Activated naive CD4-positive, alpha-beta T cell treated with anti-CD3 and anti-CD28 coated beads for 36 hours (primary cell): ENCODE measurements at regions of chr5 and their contacts with region 1.

Region 1: DNA sequence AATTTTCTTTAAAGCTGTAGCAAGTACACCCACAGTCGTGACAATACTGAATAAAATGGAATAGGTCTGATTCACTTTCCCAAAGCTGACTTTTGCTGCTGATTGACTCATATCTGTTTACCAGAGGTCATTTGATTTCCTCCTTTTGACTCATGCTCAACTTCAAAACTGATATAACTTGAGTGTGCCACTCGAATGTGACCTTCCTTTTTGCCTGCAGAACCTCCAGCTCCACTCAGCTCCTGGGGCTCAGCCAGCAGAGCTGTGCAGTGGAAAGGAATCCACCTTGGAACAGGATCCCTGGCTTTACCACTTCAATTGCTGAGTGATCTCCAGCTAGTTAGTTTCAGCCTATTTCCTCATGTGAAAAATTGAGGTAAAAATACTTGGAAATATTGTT is 84.1 kb downstream of the FEM1C start:
- DNase-seq: peak; percentile 29
- H3K4me3 Mint-ChIP-seq: no peak overlapping the region
- H3K27ac Mint-ChIP-seq: no peak overlapping the region
- H3K4me1 Mint-ChIP-seq: peaks cover 3% of the 10 kb centered on the region
- H3K27me3 Mint-ChIP-seq: peaks cover 30% of the 10 kb centered on the region

Region 2: GRCh38 chr5:115377468-115378217 is 82.8 kb before region 1 on chr5:
- CTCF ChIA-PET with region 1: no interaction called
- intact Hi-C with region 1: loop called (anchors 1 kb)
- DNase-seq: no peak
- H3K4me3 Mint-ChIP-seq: no peak overlapping the region
- H3K27ac Mint-ChIP-seq: no peak overlapping the region
- H3K4me1 Mint-ChIP-seq: peaks cover 6% of the 10 kb centered on the region
- H3K27me3 Mint-ChIP-seq: no peaks in the 10 kb centered on the region

Region 3: GRCh38 chr5:115487756-115488155 is 27.3 kb after region 1 on chr5:
- CTCF ChIA-PET with region 1: no interaction called
- intact Hi-C with region 1: loop called (anchors 1 kb)
- DNase-seq: peak; percentile 53
- H3K4me3 Mint-ChIP-seq: no peak overlapping the region
- H3K27ac Mint-ChIP-seq: peak overlapping the region; percentile 64
- H3K4me1 Mint-ChIP-seq: peaks cover 44% of the 10 kb centered on the region
- H3K27me3 Mint-ChIP-seq: peaks cover 8% of the 10 kb centered on the region

Region 4: DNA sequence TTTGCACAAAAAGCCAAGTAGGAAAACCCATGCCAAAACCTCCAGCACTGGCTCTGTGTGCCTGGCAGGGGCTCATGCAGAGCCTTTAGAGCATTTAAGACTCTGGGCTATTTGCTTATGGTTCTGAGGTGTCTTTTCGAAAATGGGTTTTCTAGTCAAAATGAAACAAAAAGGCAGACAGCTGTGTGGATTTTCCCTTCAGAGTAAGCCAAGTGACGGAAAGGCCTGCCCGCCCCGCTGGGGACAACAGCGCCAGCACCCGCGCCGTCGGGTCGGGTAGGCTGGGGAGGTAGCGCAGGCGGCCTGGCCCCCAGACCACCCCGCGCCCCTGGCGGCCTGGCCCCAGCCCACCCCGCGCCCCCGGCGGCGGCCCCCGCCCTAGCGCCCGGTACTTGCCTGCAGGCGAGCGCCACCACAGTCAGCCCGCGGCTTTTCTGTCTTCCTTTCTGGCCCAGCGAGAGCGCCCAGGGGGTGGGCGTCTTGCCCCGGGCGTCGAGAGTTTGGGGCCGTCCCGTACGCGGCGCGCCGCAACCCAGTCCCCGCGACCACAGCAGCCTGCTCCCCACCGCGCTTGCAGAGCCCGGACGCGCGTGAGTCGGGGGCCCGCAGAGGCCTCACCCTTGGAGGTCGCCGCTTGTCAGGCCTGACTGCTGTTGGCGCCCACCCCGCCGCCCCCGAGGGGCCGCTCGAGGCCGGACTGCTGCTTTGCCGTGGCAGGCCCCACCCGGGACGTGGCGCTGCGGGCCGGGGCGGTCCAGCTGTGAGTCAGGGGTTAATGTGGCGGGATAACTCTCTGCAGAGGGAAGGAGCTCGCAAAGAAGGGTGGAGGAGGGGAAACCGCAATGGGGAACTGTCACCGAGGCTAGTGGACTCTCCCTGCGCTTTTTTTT is 141.5 kb after region 1 on chr5 and contains the start of gene TICAM2:
- CTCF ChIA-PET with region 1: no interaction called
- intact Hi-C with region 1: loop called (anchors 2 kb)
- DNase-seq: peak; percentile 76
- H3K4me3 Mint-ChIP-seq: peak within 1 kb of the TSS; percentile 59
- H3K27ac Mint-ChIP-seq: no peak within 1 kb of the TSS
- H3K4me1 Mint-ChIP-seq: peaks cover 39% of the 10 kb centered on the region
- H3K27me3 Mint-ChIP-seq: no peaks in the 10 kb centered on the region
- total RNA-seq, gene TICAM2: 0.72 to 0.91 TPM

Region 5: DNA sequence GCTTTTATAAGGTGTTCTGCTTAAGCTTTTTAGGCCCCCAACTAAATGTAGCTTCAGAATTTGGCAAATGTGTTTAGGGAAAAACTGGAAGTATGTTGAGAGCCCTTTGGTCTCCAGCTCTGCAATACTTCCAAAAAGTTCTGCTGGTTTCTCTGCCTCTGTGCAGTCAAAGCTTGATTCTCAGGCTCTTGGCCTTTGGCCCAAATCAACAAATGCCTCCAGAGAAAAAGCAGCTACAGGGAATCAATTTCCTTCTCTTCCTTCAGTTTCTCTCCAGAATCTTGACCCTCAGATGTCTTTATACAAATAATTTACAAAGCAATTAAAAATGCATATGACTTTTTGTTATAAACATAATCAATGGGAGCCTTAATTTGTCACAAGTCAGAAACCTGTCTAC is 860.0 kb after region 1 on chr5:
- CTCF ChIA-PET with region 1: no interaction called
- intact Hi-C with region 1: no loop called
- DNase-seq: no peak
- H3K4me3 Mint-ChIP-seq: no peak overlapping the region
- H3K27ac Mint-ChIP-seq: no peak overlapping the region
- H3K4me1 Mint-ChIP-seq: no peaks in the 10 kb centered on the region
- H3K27me3 Mint-ChIP-seq: no peaks in the 10 kb centered on the region